Ascending aorta (tissue), 2 donors: ENCODE measurements at regions of chr16 and their contacts with region 1.

Region 1: DNA sequence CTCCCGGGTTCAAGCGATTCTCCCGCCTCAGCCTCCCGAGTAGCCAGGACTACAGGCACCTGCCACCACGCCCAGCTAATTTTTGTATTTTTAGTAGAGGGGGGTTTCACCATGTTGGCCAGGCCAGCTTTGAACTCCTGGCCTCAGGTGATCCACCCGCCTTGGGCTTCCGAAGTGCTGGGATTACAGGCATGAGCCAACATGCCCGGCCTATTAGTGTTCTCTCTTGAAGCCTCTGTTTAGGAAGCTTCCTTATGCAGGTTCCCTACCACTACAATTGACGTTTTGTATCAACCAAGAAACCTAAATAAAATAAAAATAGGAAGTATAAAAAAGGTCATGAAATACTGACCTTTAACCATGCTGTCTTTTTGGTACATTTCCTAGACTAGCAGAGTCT is 16.0 kb downstream of the CHST5 start:
- DNase-seq: no peak
- H3K4me3 ChIP-seq: no peak overlapping the region
- H3K27ac ChIP-seq: no peak overlapping the region
- H3K4me1 ChIP-seq: peaks cover 0 to 3% of the 10 kb centered on the region in 2 donors
- H3K27me3 ChIP-seq: no peaks in the 10 kb centered on the region
- CTCF ChIP-seq: no peak

Region 2: GRCh38 chr16:75305364-75306098 is 214.3 kb before region 1 on chr16:
- intact Hi-C with region 1: no loop called
- DNase-seq: peak; percentile 62 to 97
- H3K4me3 ChIP-seq: peak overlapping the region; percentile 27 to 41
- H3K27ac ChIP-seq: peak overlapping the region; percentile 78 to 93
- H3K4me1 ChIP-seq: peaks cover 17 to 30% of the 10 kb centered on the region in 2 donors
- H3K27me3 ChIP-seq: no peaks in the 10 kb centered on the region
- CTCF ChIP-seq: no peak

Region 3: GRCh38 chr16:75432828-75433731 is 86.8 kb before region 1 on chr16 and contains the start of gene CFDP1:
- intact Hi-C with region 1: loop called (anchors 1 kb)
- DNase-seq: peak; percentile 78 to 97
- H3K4me3 ChIP-seq: peak within 1 kb of the TSS; percentile 90 to 91
- H3K27ac ChIP-seq: peak within 1 kb of the TSS; percentile 97 to 98
- H3K4me1 ChIP-seq: peaks cover 2 to 17% of the 10 kb centered on the region in 2 donors
- H3K27me3 ChIP-seq: no peaks in the 10 kb centered on the region
- CTCF ChIP-seq: no peak
- total RNA-seq, gene CFDP1: 8.3 TPM

Region 4: GRCh38 chr16:75495076-75495674 is 24.7 kb before region 1 on chr16 and contains the start of gene CHST6:
- intact Hi-C with region 1: loop called (anchors 2 kb)
- DNase-seq: no peak
- H3K4me3 ChIP-seq: peak within 1 kb of the TSS; percentile 61 to 70
- H3K27ac ChIP-seq: peak within 1 kb of the TSS; percentile 56 to 59
- H3K4me1 ChIP-seq: peaks cover 2 to 13% of the 10 kb centered on the region in 2 donors
- H3K27me3 ChIP-seq: no peaks in the 10 kb centered on the region
- CTCF ChIP-seq: no peak
- total RNA-seq, gene CHST6: 4.4 TPM

Region 5: GRCh38 chr16:75566040-75566810 is 46.3 kb after region 1 on chr16 and contains the start of gene GABARAPL2:
- intact Hi-C with region 1: loop called (anchors 2 kb)
- DNase-seq: peak; percentile 23 to 90
- H3K4me3 ChIP-seq: peak within 1 kb of the TSS; percentile 93 to 96
- H3K27ac ChIP-seq: peak within 1 kb of the TSS; percentile 65 to 82
- H3K4me1 ChIP-seq: peaks cover 10 to 47% of the 10 kb centered on the region in 2 donors
- H3K27me3 ChIP-seq: no peaks in the 10 kb centered on the region
- CTCF ChIP-seq: no peak
- total RNA-seq, gene GABARAPL2: 56.1 TPM

Region 6: DNA sequence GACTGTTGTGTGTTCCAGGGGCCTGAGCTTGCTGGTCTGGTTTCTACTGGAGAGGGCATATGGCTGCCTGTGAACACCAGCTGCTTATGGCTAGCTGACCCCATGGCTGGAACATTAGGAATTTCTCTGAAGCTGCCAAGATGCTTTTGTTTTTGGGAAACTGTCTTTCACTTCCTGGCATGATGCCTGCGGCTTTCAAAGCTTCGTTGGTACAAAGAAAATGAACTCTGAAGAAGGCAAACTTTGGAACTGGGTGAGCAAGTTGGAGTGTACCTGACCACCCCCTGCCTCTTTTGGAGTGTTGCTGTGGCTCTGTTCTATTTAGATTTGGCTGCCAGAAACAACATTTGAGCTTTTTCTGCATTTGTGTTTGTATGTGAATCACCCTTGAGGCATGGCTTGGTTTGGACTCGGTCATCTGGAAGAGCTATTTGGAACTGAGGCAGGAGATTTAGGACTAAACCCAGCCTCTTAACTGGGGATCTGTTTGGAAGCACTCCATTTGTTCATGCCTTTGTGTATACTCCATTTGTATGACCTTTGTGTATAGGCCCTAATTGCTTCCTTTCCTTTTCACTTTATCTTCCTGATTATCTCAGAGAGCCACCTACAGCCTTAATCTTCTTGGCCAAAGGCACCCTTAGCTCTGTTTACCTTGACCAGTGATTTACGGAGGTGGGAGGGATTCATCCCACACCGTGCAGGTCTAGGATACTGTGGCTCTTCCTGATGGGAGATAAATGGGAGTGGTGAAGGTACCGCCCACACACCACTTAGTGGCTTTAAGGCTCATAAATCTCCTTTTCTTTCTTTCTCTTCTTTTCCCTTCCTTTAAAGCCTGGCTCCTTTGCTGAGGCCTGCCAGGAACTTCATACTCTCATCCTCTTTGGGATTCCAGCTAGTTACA is 213.7 kb after region 1 on chr16:
- intact Hi-C with region 1: no loop called
- DNase-seq: peak in 1 of 2 donors; percentile 69
- H3K4me3 ChIP-seq: peak overlapping the region in 1 of 2 donors; percentile 10
- H3K27ac ChIP-seq: peak overlapping the region; percentile 59 to 77
- H3K4me1 ChIP-seq: peaks cover 2 to 13% of the 10 kb centered on the region in 2 donors
- H3K27me3 ChIP-seq: no peaks in the 10 kb centered on the region
- CTCF ChIP-seq: no peak